ENCODE measurements at regions of chr2 and their contacts with region 1.

Region 1: GRCh38 chr2:69643602-69644505 is at the start of gene AAK1:
- DNase-seq: peak; percentile 73 to 89 (median 85)
- H3K4me3 ChIP-seq: peak within 1 kb of the TSS; percentile 79
- H3K4me3 Mint-ChIP-seq: peak within 1 kb of the TSS; percentile 95 to 99 (median 97)
- H3K27ac ChIP-seq: peak within 1 kb of the TSS; percentile 71
- H3K27ac Mint-ChIP-seq: peak within 1 kb of the TSS; percentile 93 to 98 (median 96)
- H3K4me1 ChIP-seq: peaks cover 46% of the 10 kb centered on the region
- H3K4me1 Mint-ChIP-seq: peaks cover 61 to 72% (median 68%) of the 10 kb centered on the region in 3 donors
- H3K27me3 ChIP-seq: no peaks in the 10 kb centered on the region
- H3K27me3 Mint-ChIP-seq: peaks cover 0 to 4% of the 10 kb centered on the region in 2 donors
- total RNA-seq, gene AAK1: 71.7 to 74.0 TPM

Region 2: GRCh38 chr2:69436938-69437750 is 206.7 kb before region 1 on chr2 and contains the start of gene NFU1:
- CTCF ChIA-PET with region 1: no interaction called
- POLR2A ChIA-PET with region 1: interaction called, 14 read pairs
- DNase-seq: peak; percentile 77 to 94 (median 91)
- H3K4me3 ChIP-seq: peak within 1 kb of the TSS; percentile 73
- H3K4me3 Mint-ChIP-seq: peak within 1 kb of the TSS; percentile 92 to 99 (median 99)
- H3K27ac ChIP-seq: peak within 1 kb of the TSS; percentile 91
- H3K27ac Mint-ChIP-seq: peak within 1 kb of the TSS; percentile 96 to 100 (median 98)
- H3K4me1 ChIP-seq: peaks cover 23% of the 10 kb centered on the region
- H3K4me1 Mint-ChIP-seq: peaks cover 33 to 55% (median 43%) of the 10 kb centered on the region in 3 donors
- H3K27me3 ChIP-seq: no peaks in the 10 kb centered on the region
- H3K27me3 Mint-ChIP-seq: no peaks in the 10 kb centered on the region
- total RNA-seq, gene NFU1: 40.4 to 43.2 TPM

Region 3: DNA sequence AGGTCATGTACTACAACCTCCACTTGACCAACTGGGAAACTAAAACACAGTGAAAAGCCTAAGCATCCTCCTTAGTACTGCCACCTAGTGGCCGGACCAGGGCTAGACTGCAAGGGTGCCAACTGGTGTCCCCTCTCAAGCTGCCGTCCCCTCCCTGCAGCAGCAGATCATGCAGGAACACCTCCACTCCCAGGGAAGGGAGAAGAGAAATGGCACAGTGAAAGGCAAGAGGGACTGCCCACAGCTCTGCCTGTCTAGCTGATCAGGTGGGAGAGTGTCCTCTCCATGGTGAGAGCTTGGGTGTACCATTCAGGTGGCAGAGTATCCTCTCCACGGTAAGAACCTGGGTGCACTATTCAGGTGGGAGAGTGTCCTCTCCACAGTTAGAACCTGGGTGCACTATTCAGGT is 78.4 kb before region 1 on chr2:
- CTCF ChIA-PET with region 1: interaction called, 25 read pairs
- POLR2A ChIA-PET with region 1: no interaction called
- DNase-seq: peak; percentile 43 to 73 (median 58)
- H3K4me3 ChIP-seq: no peak overlapping the region
- H3K4me3 Mint-ChIP-seq: peak overlapping the region in 6 of 7 donors; percentile 41 to 62 (median 56)
- H3K27ac ChIP-seq: no peak overlapping the region
- H3K27ac Mint-ChIP-seq: peak overlapping the region; percentile 74 to 95 (median 88)
- H3K4me1 ChIP-seq: peaks cover 75% of the 10 kb centered on the region
- H3K4me1 Mint-ChIP-seq: peaks cover 89 to 95% (median 91%) of the 10 kb centered on the region in 3 donors
- H3K27me3 ChIP-seq: no peaks in the 10 kb centered on the region
- H3K27me3 Mint-ChIP-seq: no peaks in the 10 kb centered on the region

Region 4: DNA sequence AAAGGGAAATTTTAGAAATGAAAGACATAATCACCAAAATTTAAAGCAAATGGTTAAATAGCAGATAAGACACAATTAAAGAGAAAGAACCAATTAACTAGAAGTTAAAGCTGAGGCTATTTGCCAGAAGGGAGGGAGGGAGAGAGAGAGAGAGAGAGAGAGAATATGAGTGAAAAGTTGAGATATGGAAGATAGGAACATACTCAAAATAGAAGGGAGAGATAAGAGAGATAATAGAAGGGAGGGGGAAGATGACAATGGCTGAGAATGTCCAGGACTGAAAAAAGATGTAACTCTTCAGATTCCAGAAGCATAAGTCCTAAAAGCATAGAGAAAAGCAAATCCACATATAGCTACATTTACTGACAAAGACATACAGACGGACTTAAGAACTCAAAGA is 16.8 kb after region 1 on chr2:
- CTCF ChIA-PET with region 1: interaction called, 3 read pairs
- POLR2A ChIA-PET with region 1: interaction called, 10 read pairs
- DNase-seq: no peak
- H3K4me3 ChIP-seq: no peak overlapping the region
- H3K4me3 Mint-ChIP-seq: no peak overlapping the region
- H3K27ac ChIP-seq: no peak overlapping the region
- H3K27ac Mint-ChIP-seq: peak overlapping the region in 1 of 8 donors; percentile 54
- H3K4me1 ChIP-seq: peaks cover 5% of the 10 kb centered on the region
- H3K4me1 Mint-ChIP-seq: peaks cover 7 to 14% (median 10%) of the 10 kb centered on the region in 3 donors
- H3K27me3 ChIP-seq: no peaks in the 10 kb centered on the region
- H3K27me3 Mint-ChIP-seq: peaks cover 0 to 1% of the 10 kb centered on the region in 2 donors

Region 5: GRCh38 chr2:69717861-69718273 is 74.0 kb after region 1 on chr2:
- CTCF ChIA-PET with region 1: interaction called, 66 read pairs
- POLR2A ChIA-PET with region 1: no interaction called
- DNase-seq: no peak
- H3K4me3 ChIP-seq: no peak overlapping the region
- H3K4me3 Mint-ChIP-seq: no peak overlapping the region
- H3K27ac ChIP-seq: no peak overlapping the region
- H3K27ac Mint-ChIP-seq: no peak overlapping the region
- H3K4me1 ChIP-seq: peaks cover 7% of the 10 kb centered on the region
- H3K4me1 Mint-ChIP-seq: peaks cover 9 to 12% (median 12%) of the 10 kb centered on the region in 3 donors
- H3K27me3 ChIP-seq: no peaks in the 10 kb centered on the region
- H3K27me3 Mint-ChIP-seq: peaks cover 0 to 3% of the 10 kb centered on the region in 2 donors

Region 6: GRCh38 chr2:69741619-69742466 is 98.0 kb after region 1 on chr2 and contains the start of gene ANXA4:
- CTCF ChIA-PET with region 1: no interaction called
- POLR2A ChIA-PET with region 1: no interaction called
- DNase-seq: peak; percentile 47 to 73 (median 61)
- H3K4me3 ChIP-seq: peak within 1 kb of the TSS; percentile 56
- H3K4me3 Mint-ChIP-seq: peak within 1 kb of the TSS; percentile 94 to 98 (median 96)
- H3K27ac ChIP-seq: peak within 1 kb of the TSS; percentile 51
- H3K27ac Mint-ChIP-seq: peak within 1 kb of the TSS; percentile 71 to 97 (median 92)
- H3K4me1 ChIP-seq: peaks cover 11% of the 10 kb centered on the region
- H3K4me1 Mint-ChIP-seq: peaks cover 18 to 21% (median 19%) of the 10 kb centered on the region in 3 donors
- H3K27me3 ChIP-seq: no peaks in the 10 kb centered on the region
- H3K27me3 Mint-ChIP-seq: no peaks in the 10 kb centered on the region
- total RNA-seq, gene ANXA4: 30.2 to 33.7 TPM

Region 7: DNA sequence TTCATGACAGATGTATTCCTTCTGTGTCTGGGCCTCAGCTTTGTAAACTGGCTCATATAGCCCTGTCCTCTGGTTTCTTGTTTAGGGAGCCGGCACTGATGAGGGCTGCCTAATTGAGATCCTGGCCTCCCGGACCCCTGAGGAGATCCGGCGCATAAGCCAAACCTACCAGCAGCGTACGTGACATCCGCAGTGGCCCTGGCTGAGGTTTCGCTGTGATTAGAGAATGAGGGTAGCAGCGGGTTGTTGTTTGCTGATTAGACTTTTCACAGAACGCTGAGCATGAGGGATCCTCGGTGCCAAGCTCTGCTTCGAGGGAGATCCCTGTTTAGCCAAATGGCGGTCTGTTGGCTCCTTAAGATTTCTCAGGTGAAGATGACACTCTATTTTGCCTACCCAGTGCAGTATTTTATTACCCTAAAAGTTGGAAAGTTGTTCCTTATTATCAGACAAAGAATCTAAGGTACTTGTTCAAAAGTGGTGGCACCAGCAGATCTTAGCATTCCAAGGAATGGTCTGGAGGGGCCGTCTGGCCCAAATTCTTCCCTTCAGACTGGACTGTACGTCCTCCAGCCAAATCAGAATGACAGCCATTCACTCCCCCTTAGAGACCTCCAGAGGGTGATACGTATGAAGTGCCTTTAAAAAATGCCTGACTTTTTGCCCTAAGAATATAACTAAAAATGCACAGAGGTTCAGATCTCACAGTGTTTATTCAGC is 164.1 kb after region 1 on chr2:
- CTCF ChIA-PET with region 1: no interaction called
- POLR2A ChIA-PET with region 1: no interaction called
- DNase-seq: no peak
- H3K4me3 ChIP-seq: no peak overlapping the region
- H3K4me3 Mint-ChIP-seq: no peak overlapping the region
- H3K27ac ChIP-seq: no peak overlapping the region
- H3K27ac Mint-ChIP-seq: peak overlapping the region in 2 of 8 donors; percentile 6 to 87
- H3K4me1 ChIP-seq: no peaks in the 10 kb centered on the region
- H3K4me1 Mint-ChIP-seq: peaks cover 5 to 13% (median 12%) of the 10 kb centered on the region in 3 donors
- H3K27me3 ChIP-seq: no peaks in the 10 kb centered on the region
- H3K27me3 Mint-ChIP-seq: peaks cover 0 to 3% of the 10 kb centered on the region in 2 donors

Region 8: GRCh38 chr2:71060871-71061270 is 1417.0 kb after region 1 on chr2:
- CTCF ChIA-PET with region 1: no interaction called
- POLR2A ChIA-PET with region 1: no interaction called
- DNase-seq: no peak
- H3K4me3 ChIP-seq: no peak overlapping the region
- H3K4me3 Mint-ChIP-seq: no peak overlapping the region
- H3K27ac ChIP-seq: no peak overlapping the region
- H3K27ac Mint-ChIP-seq: peak overlapping the region in 2 of 8 donors; percentile 30 to 66
- H3K4me1 ChIP-seq: no peaks in the 10 kb centered on the region
- H3K4me1 Mint-ChIP-seq: no peaks in the 10 kb centered on the region
- H3K27me3 ChIP-seq: no peaks in the 10 kb centered on the region
- H3K27me3 Mint-ChIP-seq: peaks cover 9 to 27% of the 10 kb centered on the region in 2 donors

Measured in CD8-positive, alpha-beta memory T cell (primary cell).